PC-9 (cell line): ENCODE measurements at regions of chr5 and their contacts with region 1.

Region 1: DNA sequence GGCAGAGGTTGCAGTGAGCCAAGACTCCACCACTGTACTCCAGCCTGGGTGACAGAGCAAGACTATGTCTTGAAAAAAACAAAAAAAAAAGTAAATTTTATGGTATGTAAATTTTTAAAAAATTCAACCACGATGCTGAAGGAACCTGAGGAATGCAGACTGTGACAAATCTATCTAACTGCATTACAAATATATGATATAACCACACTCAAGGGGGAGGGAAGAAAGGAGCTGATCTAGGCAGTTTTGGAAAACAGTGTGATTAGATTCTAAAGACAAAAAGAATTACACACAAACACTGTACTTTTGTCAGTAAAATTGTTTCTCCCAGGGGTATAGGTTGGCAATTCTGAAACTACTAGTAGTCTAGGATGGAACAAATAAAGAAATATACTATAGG is 17.0 kb downstream of the LARS1 start:
- DNase-seq: no peak
- H3K4me3 ChIP-seq: no peak overlapping the region
- H3K27ac ChIP-seq: no peak overlapping the region
- H3K4me1 ChIP-seq: no peaks in the 10 kb centered on the region
- H3K27me3 ChIP-seq: no peaks in the 10 kb centered on the region
- CTCF ChIP-seq: no peak

Region 2: GRCh38 chr5:145872486-145872885 is 293.0 kb before region 1 on chr5:
- CTCF ChIA-PET with region 1: no interaction called
- POLR2A ChIA-PET with region 1: no interaction called
- intact Hi-C with region 1: no loop called
- DNase-seq: no peak
- H3K4me3 ChIP-seq: no peak overlapping the region
- H3K27ac ChIP-seq: no peak overlapping the region
- H3K4me1 ChIP-seq: peaks cover 4% of the 10 kb centered on the region; the same call in 1 of the 2 replicates
- H3K27me3 ChIP-seq: no peaks in the 10 kb centered on the region
- CTCF ChIP-seq: no peak

Region 3: DNA sequence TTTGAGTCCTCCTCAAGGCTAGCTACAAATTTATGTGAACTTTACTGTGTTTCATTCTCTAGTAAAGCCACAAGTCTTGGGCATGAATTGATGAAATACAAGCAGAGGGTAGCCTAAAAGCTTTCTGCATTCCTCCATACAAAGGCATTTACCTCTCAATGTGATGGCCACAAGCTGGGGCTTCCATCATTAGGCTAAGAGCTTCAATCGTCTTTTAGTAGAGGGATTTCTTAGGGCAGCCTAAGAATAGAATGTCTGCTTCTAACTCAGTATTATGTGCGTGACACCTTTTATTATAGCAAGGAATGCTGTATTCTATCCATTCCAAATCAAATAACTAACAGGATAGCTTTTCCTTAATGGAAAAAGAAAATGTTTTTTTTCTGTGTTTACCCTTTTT is 63.8 kb before region 1 on chr5:
- CTCF ChIA-PET with region 1: no interaction called
- POLR2A ChIA-PET with region 1: interaction called, 12 read pairs
- intact Hi-C with region 1: no loop called
- DNase-seq: no peak
- H3K4me3 ChIP-seq: no peak overlapping the region
- H3K27ac ChIP-seq: no peak overlapping the region
- H3K4me1 ChIP-seq: no peaks in the 10 kb centered on the region
- H3K27me3 ChIP-seq: no peaks in the 10 kb centered on the region
- CTCF ChIP-seq: no peak

Region 4: GRCh38 chr5:146273109-146273508 is 107.6 kb after region 1 on chr5:
- CTCF ChIA-PET with region 1: no interaction called
- POLR2A ChIA-PET with region 1: no interaction called
- intact Hi-C with region 1: loop called (anchors 5 kb)
- DNase-seq: no peak
- H3K4me3 ChIP-seq: no peak overlapping the region
- H3K27ac ChIP-seq: 0 out of 2 replicates have a peak overlapping the region, but pooled peaks have one; percentile 1
- H3K4me1 ChIP-seq: no peaks in the 10 kb centered on the region
- H3K27me3 ChIP-seq: no peaks in the 10 kb centered on the region
- CTCF ChIP-seq: no peak

Region 5: GRCh38 chr5:146461319-146461718 is 295.9 kb after region 1 on chr5:
- CTCF ChIA-PET with region 1: no interaction called
- POLR2A ChIA-PET with region 1: no interaction called
- intact Hi-C with region 1: loop called (anchors 5 kb)
- DNase-seq: no peak
- H3K4me3 ChIP-seq: no peak overlapping the region
- H3K27ac ChIP-seq: no peak overlapping the region
- H3K4me1 ChIP-seq: no peaks in the 10 kb centered on the region
- H3K27me3 ChIP-seq: no peaks in the 10 kb centered on the region
- CTCF ChIP-seq: no peak